Activated CD8-positive, alpha-beta T cell treated with anti-CD3 and anti-CD28 coated beads, Interleukin-2, amount 10 ng/mL, durations not matched to agents 7 days and 5 days (primary cell): ENCODE measurements at regions of chr20 and their contacts with region 1.

Region 1: DNA sequence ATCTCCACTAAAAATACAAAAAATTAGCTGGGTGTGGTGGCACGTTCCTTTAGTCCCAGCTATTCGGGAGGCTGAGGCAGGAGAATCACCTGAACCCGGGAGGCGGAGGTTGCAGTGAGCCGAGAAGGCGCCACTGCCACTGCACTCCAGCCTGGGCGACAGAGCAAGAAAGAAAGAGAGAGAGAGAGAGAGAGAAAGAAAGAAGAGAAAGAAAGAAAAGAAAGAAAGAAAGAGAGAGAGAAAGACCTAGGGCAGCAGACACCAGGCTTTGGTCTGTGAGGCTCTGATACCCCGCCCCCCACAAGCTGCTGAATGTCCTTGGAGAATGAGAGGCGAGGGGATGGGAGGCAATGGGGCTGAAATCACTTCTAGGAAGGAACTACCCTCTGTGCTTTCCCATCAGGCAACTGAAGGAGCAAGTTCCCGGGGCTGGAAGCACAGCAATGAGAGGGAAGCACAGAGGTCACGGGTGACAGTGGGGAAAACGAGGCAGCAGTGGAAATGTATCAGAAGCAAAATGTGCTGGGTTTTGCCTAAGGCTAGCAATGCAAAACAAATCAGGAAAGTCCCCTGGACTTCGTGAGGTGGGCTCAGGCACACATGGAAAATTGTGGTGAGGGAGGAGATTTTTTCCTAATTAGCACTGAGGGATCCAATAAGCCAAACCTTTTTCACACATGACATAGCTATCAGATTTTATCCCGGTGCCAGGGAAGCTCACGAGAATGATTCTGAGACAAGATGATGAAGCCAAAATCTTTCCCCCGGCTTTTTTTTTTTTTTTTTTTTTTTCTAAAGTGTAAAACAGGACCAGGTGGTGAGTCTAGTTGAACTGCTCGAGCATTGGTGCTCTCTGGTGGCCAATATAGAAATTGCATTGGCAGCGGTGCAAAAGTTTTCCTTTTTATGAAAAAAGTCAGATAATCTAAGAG is 16.9 kb upstream of the ARFGEF2 start:
- DNase-seq: peak; percentile 83
- ATAC-seq: peak; percentile 60
- H3K4me3 Mint-ChIP-seq: no peak overlapping the region
- H3K27ac Mint-ChIP-seq: no peak overlapping the region
- H3K4me1 Mint-ChIP-seq: peaks cover 18% of the 10 kb centered on the region
- H3K27me3 Mint-ChIP-seq: peaks cover 12% of the 10 kb centered on the region

Region 2: GRCh38 chr20:48892844-48893243 is 11.8 kb before region 1 on chr20:
- CTCF ChIA-PET with region 1: interaction called, 13 read pairs
- POLR2A ChIA-PET with region 1: no interaction called
- DNase-seq: no peak
- ATAC-seq: no peak
- H3K4me3 Mint-ChIP-seq: no peak overlapping the region
- H3K27ac Mint-ChIP-seq: no peak overlapping the region
- H3K4me1 Mint-ChIP-seq: no peaks in the 10 kb centered on the region
- H3K27me3 Mint-ChIP-seq: peaks cover 28% of the 10 kb centered on the region

Region 3: GRCh38 chr20:49054056-49054643 is 149.5 kb after region 1 on chr20:
- CTCF ChIA-PET with region 1: no interaction called
- POLR2A ChIA-PET with region 1: no interaction called
- DNase-seq: no peak
- ATAC-seq: no peak
- H3K4me3 Mint-ChIP-seq: no peak overlapping the region
- H3K27ac Mint-ChIP-seq: no peak overlapping the region
- H3K4me1 Mint-ChIP-seq: peaks cover 41% of the 10 kb centered on the region
- H3K27me3 Mint-ChIP-seq: no peaks in the 10 kb centered on the region